Caco-2 (cell line): ENCODE measurements at regions of chr18 and their contacts with region 1.

Region 1: GRCh38 chr18:58400337-58400870 is 228.5 kb downstream of the ALPK2 start:
- DNase-seq: no peak
- H3K4me3 ChIP-seq: no peak overlapping the region
- H3K4me3 Mint-ChIP-seq: no peak overlapping the region
- H3K27ac Mint-ChIP-seq: no peak overlapping the region
- H3K4me1 ChIP-seq: no peaks in the 10 kb centered on the region
- H3K4me1 Mint-ChIP-seq: no peaks in the 10 kb centered on the region
- H3K27me3 ChIP-seq: no peaks in the 10 kb centered on the region
- H3K27me3 Mint-ChIP-seq: no peaks in the 10 kb centered on the region
- CTCF ChIP-seq: no peak

Region 2: DNA sequence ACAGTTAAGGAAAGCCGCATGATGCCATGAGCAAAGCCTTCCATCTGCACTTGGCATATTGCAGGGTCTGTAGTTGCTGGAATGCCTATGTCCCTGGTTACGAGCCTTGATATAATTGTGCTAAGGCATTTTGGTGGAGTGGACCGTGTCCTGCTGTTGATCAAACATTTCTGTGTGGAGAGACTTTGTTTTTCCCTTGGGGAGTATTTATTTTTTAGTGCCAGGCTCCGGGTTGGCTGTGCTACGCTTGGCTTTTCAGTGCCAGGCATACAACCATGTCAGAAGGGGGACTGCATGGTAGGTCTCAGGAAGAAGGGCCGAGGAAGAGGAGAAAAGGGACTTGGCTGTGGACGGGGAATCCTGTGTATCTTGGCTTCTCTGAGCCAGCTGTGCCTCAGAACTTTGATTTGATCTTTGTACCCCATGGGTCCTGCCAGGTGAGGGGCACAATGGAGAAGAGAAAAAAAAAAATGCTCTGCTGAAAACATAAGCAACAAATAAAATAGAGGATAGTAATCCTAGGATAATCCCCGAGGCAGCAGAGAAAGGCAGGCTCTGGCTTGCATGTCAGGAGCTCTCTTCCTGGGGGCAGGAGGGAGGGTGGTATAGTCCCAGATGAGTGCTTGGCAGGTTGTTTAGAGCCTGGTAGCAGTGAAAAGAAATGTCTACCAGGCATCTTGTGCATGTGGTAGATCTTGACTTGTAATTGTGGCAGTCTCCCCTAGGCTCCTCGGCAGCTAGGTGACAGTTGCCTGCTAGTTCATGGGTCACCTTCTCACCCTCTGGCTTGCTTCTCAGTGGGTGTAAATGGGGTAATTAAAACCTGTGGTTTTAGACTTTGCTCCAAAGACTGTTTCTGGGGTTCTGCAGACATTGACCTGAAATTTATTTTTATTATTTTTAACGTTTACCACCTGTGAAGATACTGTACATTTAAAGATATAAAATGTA is 123.3 kb before region 1 on chr18:
- CTCF ChIA-PET with region 1: no interaction called
- POLR2A ChIA-PET with region 1: no interaction called
- intact Hi-C with region 1: no loop called
- DNase-seq: no peak
- H3K4me3 ChIP-seq: no peak overlapping the region
- H3K4me3 Mint-ChIP-seq: no peak overlapping the region
- H3K27ac Mint-ChIP-seq: no peak overlapping the region
- H3K4me1 ChIP-seq: 0 out of 2 replicates have a peak, but pooled peaks cover 4% of the 10 kb centered on the region
- H3K4me1 Mint-ChIP-seq: peaks cover 15% of the 10 kb centered on the region
- H3K27me3 ChIP-seq: no peaks in the 10 kb centered on the region
- H3K27me3 Mint-ChIP-seq: no peaks in the 10 kb centered on the region
- CTCF ChIP-seq: no peak

Region 3: DNA sequence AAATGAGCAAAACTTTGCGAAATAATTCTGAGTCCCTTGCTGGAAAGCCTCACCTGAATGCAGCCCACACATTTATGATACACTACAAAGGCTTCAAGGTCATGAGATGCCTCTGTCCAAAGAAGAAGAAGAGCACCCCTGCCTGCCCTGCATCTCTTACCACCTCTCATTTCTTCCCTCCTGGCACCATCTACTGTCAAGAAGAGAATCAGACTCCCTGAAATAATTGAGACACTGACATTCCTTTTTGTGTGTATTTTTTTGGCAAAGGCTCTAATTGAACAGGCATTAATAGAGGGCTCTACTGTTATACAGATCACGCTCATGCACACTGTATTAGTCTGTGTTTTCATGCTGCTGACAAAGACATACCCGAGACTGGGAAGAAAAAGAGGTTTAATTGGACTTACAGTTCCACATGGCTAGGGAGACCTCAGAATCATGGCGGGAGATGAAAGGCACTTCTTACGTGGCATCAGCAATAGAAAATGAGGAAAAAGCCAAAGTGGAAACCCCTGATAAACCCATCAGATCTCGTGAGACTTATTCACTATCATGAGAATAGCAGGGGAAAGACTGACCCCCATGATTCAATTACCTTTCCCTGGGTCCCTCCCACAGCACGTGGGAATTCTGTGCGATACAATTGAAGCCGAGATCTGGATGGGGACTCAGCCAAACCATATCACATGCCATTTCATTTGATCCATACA is 52.2 kb after region 1 on chr18:
- CTCF ChIA-PET with region 1: interaction called, 3 read pairs
- POLR2A ChIA-PET with region 1: no interaction called
- intact Hi-C with region 1: loop called (anchors 1 kb)
- DNase-seq: peak in 1 of 2 experiments; percentile 5
- H3K4me3 ChIP-seq: no peak overlapping the region
- H3K4me3 Mint-ChIP-seq: no peak overlapping the region
- H3K27ac Mint-ChIP-seq: no peak overlapping the region
- H3K4me1 ChIP-seq: 0 out of 2 replicates have a peak, but pooled peaks cover 6% of the 10 kb centered on the region
- H3K4me1 Mint-ChIP-seq: no peaks in the 10 kb centered on the region
- H3K27me3 ChIP-seq: no peaks in the 10 kb centered on the region
- H3K27me3 Mint-ChIP-seq: no peaks in the 10 kb centered on the region
- CTCF ChIP-seq: no peak

Region 4: GRCh38 chr18:58493516-58494253 is 93.3 kb after region 1 on chr18:
- CTCF ChIA-PET with region 1: no interaction called
- POLR2A ChIA-PET with region 1: no interaction called
- intact Hi-C with region 1: loop called (anchors 1 kb)
- DNase-seq: peak; percentile 49 to 64
- H3K4me3 ChIP-seq: no peak overlapping the region
- H3K4me3 Mint-ChIP-seq: no peak overlapping the region
- H3K27ac Mint-ChIP-seq: no peak overlapping the region
- H3K4me1 ChIP-seq: no peaks in the 10 kb centered on the region
- H3K4me1 Mint-ChIP-seq: peaks cover 7% of the 10 kb centered on the region
- H3K27me3 ChIP-seq: no peaks in the 10 kb centered on the region
- H3K27me3 Mint-ChIP-seq: no peaks in the 10 kb centered on the region
- CTCF ChIP-seq: peak; percentile 51 to 61